ENCODE measurements at regions of chr15 and their contacts with region 1.

Region 1: GRCh38 chr15:42548253-42549031 is at the starts of genes HAUS2 and LRRC57:
- DNase-seq: peak; percentile 94
- ATAC-seq: peak; percentile 90
- H3K4me3 ChIP-seq: peak within 1 kb of the TSS; percentile 94
- H3K27ac ChIP-seq: peak within 1 kb of the TSS; percentile 24
- H3K4me1 ChIP-seq: peaks cover 16% of the 10 kb centered on the region
- H3K27me3 ChIP-seq: no peaks in the 10 kb centered on the region
- CTCF ChIP-seq: no peak
- total RNA-seq, gene HAUS2: 36.5 and 44.1 TPM in 2 replicates
- total RNA-seq, gene LRRC57: 9.1 and 19.0 TPM in 2 replicates

Region 2: GRCh38 chr15:42495361-42496212 is 52.9 kb before region 1 on chr15 and contains the start of gene SNAP23:
- CTCF ChIA-PET with region 1: no interaction called
- POLR2A ChIA-PET with region 1: interaction called, 6 read pairs
- intact Hi-C with region 1: loop called (anchors 5 kb)
- DNase-seq: peak; percentile 92
- ATAC-seq: peak; percentile 89
- H3K4me3 ChIP-seq: peak within 1 kb of the TSS; percentile 77
- H3K27ac ChIP-seq: peak within 1 kb of the TSS; percentile 61
- H3K4me1 ChIP-seq: peaks cover 36% of the 10 kb centered on the region
- H3K27me3 ChIP-seq: no peaks in the 10 kb centered on the region
- CTCF ChIP-seq: no peak
- total RNA-seq, gene SNAP23: 40.2 and 45.1 TPM in 2 replicates

Region 3: DNA sequence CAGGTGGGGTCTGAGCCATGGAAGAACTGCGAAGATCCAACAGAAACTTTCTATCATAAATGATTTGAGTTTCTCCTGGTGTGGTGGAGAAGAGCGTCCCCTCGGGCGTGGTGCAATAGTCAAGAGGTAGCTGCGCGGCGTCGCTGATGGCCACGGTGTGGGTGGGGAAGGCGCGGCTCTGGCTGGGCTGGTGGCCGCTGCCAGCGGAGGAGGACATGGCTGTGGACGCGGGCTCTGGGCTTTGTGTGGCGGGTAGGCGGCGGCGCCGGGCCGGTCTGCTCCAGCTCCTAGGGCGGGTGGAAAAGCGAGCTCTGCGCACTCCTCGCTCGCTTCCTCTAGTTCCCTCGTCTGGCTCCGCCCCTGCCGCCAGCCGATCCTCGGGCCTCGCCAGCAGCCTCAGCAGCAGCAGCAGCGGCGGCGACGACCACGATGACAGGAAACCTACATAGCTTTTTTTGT is 32.9 kb after region 1 on chr15:
- CTCF ChIA-PET with region 1: no interaction called
- POLR2A ChIA-PET with region 1: no interaction called
- intact Hi-C with region 1: loop called (anchors 5 kb)
- DNase-seq: peak; percentile 76
- ATAC-seq: peak; percentile 98
- H3K4me3 ChIP-seq: peak overlapping the region; percentile 56
- H3K27ac ChIP-seq: no peak overlapping the region
- H3K4me1 ChIP-seq: peaks cover 11% of the 10 kb centered on the region
- H3K27me3 ChIP-seq: no peaks in the 10 kb centered on the region
- CTCF ChIP-seq: no peak

Region 4: GRCh38 chr15:42650208-42651066 is 102.0 kb after region 1 on chr15:
- CTCF ChIA-PET with region 1: no interaction called
- POLR2A ChIA-PET with region 1: no interaction called
- intact Hi-C with region 1: loop called (anchors 1 kb)
- DNase-seq: peak; percentile 98
- ATAC-seq: peak; percentile 100
- H3K4me3 ChIP-seq: no peak overlapping the region
- H3K27ac ChIP-seq: no peak overlapping the region
- H3K4me1 ChIP-seq: peaks cover 4% of the 10 kb centered on the region
- H3K27me3 ChIP-seq: no peaks in the 10 kb centered on the region
- CTCF ChIP-seq: peak; percentile 96

Measured in PC-3 (cell line).